ENCODE measurements at regions of chr7 and their contacts with region 1.

Region 1: DNA sequence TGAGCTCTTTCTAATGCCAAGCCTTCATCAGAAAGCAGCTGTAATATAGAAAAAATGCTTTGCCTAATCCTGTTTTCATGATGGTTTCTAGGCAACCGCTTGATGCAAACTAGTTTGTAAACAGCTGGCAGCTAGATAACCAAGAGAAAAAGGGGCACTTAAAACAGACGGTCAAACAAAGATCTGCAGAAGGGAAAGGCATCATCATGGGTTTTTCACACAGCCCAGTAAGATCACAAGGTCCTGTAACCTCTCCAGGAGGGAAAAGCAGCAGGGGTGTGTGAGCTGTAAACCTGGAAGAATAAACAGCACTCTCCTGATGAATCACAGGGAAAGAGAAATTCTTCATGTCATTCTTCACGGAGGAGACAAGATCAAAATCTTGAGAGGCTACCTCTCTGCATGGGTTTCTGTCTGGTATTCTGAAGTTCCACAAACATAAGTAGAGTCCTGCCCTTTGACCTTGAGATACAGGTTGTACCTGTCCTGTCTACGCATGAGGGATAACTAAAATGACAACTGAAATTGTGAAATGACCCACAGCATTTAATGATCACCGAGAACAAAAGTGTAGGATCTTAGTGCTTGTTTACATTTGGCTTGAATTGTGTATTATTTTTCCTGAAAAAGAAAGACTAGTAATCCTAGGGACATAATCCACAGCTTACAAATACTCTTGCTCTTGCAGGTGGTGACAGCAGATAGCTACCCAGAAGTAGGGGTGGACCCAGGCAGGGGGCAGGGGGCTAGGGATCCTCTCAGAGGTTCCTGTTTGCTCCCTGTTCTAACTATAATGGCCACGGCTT is 48.0 kb downstream of the CREB3L2 start:
- DNase-seq: no peak
- H3K4me3 Mint-ChIP-seq: no peak overlapping the region
- H3K27ac Mint-ChIP-seq: no peak overlapping the region
- H3K4me1 Mint-ChIP-seq: peaks cover 28% of the 10 kb centered on the region
- H3K27me3 Mint-ChIP-seq: no peaks in the 10 kb centered on the region

Region 2: GRCh38 chr7:136883046-136883445 is 1070.8 kb before region 1 on chr7:
- intact Hi-C with region 1: no loop called
- DNase-seq: no peak
- H3K4me3 Mint-ChIP-seq: no peak overlapping the region
- H3K27ac Mint-ChIP-seq: no peak overlapping the region
- H3K4me1 Mint-ChIP-seq: no peaks in the 10 kb centered on the region
- H3K27me3 Mint-ChIP-seq: no peaks in the 10 kb centered on the region

Region 3: DNA sequence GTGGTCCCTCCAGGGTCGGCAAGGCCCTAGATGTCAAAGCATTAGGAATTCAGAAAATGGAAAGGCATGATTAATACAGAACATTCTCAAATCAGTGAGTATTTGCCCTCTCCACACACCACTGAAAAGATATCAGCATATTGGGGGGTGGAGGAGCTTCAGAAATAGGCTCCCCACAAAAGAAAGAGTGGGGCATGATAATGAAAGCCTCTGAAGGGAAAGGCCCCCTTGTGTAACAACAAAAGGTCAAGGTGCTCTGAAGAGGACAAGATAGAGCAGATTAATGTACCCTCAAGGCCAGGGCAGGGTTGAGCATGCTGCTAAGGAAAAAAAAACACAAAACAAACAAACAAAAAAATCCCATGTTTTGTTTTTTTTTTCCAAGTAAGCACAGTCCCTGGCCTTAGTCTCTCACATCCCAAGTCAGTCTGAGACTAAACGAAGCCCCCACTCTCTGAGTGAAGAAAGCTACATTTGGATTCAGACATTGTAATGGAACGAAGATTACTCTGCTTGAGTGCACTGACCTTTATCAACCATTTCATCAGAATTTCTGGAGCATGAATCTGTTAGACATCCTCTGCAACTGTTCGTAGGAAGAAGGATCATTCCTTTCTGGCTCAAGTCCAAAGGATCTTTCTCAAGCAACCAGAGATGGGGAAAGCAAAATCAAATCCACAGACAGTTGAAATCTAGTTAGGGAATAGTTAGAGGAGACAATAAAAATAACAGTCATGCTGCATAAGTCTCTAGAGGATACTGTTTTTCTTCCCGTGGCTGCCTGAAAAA is 79.7 kb before region 1 on chr7:
- intact Hi-C with region 1: no loop called
- DNase-seq: no peak
- H3K4me3 Mint-ChIP-seq: no peak overlapping the region
- H3K27ac Mint-ChIP-seq: peak overlapping the region; percentile 88
- H3K4me1 Mint-ChIP-seq: peaks cover 38% of the 10 kb centered on the region
- H3K27me3 Mint-ChIP-seq: no peaks in the 10 kb centered on the region

Region 4: DNA sequence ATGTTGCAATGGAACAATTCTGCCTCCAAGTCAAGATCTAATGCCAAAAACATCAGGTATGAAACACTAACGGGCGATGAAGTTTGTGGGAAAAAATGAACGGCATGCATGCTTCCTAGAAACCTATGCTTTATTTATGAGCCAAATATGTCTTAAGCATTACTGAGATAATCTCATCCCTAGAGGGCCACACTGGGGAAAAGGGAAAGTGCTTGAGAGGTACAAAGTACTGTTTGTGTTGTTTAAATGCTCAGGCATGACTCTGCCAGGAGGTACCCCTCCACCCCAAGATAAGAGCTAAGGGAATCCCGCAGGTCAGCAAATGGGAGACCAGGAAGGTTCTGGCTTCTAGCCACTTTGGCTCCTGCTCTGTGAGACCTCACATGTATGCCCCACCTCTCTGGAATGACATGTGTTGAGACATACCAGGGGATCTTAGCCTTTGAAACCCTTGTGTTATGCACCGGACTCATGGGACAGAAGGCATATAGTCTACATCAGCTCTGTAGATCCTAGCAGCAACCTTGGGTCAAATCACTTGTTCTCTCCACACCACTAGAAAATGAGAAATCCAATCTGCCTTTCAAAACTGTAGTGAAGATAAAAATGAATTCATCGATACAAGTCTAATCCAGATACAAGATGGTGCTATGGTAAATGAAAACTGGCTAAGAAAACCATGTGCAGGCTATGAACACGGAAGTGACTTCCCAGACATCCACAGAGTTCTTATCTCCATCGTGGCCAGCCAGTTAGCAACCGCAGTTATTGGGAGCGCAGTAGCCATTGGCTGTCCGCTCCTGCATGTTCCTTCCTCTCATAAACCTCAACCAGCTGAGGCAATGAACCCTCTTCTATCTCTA is 13.0 kb before region 1 on chr7:
- intact Hi-C with region 1: loop called (anchors 2 kb)
- DNase-seq: no peak
- H3K4me3 Mint-ChIP-seq: no peak overlapping the region
- H3K27ac Mint-ChIP-seq: peak overlapping the region; percentile 6
- H3K4me1 Mint-ChIP-seq: peaks cover 22% of the 10 kb centered on the region
- H3K27me3 Mint-ChIP-seq: no peaks in the 10 kb centered on the region

Measured in activated T-helper 1 cell treated with anti-CD3 and anti-CD28 coated beads, Interleukin-12 subunit alpha, Interleukin-12 subunit beta, Interleukin-2, Interleukin-4 antibody, amounts not matched to agents 30 ng/mL and 10 ng/mL and 1 ng/mL, durations not matched to agents 14 hours and 24 hours and 36 hours (primary cell).